Prostate gland (tissue), 2 donors: ENCODE measurements at regions of chr12 and their contacts with region 1.

Region 1: DNA sequence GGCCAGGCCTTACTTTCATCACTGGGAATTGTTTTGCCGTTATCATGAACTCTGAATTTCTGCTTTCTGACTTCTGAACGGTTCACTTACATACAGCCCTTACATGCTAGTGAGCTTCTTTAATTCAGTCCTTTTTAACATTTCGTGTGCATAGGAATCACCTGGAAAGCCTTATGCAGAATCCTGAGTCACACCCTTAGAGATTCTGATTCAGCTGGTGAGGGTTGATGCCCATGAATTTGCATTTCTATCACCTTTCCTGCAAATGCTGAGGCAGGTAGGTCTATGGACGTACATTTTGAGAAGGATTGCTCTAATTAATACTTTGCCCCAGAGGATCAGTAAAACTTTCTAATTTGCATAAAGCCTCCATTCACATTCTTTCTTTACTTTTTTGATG is 44.0 kb downstream of the PPHLN1 start:
- DNase-seq: no peak
- H3K4me3 ChIP-seq: no peak overlapping the region
- H3K27ac ChIP-seq: no peak overlapping the region
- H3K4me1 ChIP-seq: no peaks in the 10 kb centered on the region
- H3K27me3 ChIP-seq: no peaks in the 10 kb centered on the region
- CTCF ChIP-seq: no peak
- POLR2A ChIP-seq: no peak

Region 2: DNA sequence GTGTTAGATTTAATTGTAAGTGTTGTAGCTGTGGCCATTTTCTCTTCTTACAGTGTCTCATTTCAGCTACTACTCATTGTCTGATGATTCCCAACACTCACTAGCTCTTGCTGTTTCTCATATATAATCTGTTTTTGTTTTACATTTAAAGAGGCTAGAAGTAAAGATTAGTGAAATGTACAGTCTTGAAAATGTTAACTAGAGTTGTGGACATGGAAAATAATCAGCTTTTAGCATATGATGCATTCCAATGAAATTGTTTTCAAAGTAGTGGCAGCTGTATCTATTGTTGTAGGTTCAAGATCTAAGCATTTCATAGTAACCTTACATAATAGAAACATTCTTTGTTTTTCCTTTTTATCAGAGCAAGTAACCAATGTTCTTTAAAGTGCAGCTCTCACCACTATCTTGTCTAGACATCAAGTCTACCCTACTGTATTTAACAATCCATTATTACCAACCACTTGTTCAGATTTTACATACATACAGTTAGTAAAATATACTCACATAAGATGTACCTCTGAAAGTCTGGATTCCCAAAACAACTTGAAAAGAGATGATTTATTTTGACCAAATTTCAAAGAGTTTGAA is 32.9 kb after region 1 on chr12:
- intact Hi-C with region 1: loop called (anchors 2 kb)
- DNase-seq: no peak
- H3K4me3 ChIP-seq: no peak overlapping the region
- H3K27ac ChIP-seq: no peak overlapping the region
- H3K4me1 ChIP-seq: no peaks in the 10 kb centered on the region
- H3K27me3 ChIP-seq: no peaks in the 10 kb centered on the region
- CTCF ChIP-seq: no peak
- POLR2A ChIP-seq: no peak